ENCODE measurements at regions of chr1 and their contacts with region 1.

Region 1: DNA sequence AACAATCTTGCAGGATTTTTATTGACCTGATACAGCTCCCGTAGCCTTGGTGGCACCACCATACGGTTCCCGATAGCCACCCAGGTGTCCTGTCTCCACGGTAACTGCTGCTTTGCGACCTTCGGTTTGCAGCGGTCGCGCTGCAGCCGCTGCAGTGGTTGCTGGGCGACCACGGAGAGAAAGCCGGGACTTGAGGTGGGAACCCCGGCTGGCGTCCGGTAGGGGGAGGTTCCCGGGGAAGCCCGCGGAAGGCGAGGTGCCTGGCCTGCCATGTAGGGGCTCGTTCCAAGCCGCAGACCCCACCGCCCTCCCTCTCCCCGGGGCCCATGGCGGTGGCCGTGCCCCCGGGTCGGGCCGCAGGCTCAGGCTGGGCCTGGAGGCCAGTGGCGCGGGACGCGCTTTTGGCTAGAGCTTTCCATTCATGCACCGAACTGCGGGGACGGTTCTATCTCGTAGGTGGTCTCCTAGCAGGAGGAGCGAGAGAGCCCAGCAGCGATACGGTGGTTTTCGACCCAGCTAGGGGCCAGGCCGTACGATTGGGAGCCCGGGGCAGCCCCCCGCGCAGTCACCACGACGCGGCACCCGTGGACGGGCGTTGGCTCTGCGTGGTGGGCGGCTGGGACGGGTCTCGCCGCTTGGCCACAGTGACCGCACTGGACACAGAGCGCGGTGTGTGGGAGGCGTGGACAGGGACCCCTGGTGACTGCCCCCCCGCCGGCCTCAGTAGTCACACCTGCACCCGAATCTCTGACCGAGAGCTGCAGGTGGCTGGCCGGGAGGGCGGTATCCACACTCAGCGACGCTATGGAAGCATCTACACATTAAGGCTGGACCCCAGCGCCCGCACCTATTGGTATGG is at the start of gene KLHDC9:
- DNase-seq: peak; percentile 78
- H3K4me3 Mint-ChIP-seq: peak within 1 kb of the TSS; percentile 70
- H3K27ac Mint-ChIP-seq: peak within 1 kb of the TSS; percentile 54
- H3K4me1 Mint-ChIP-seq: peaks cover 39% of the 10 kb centered on the region
- H3K27me3 Mint-ChIP-seq: no peaks in the 10 kb centered on the region
- total RNA-seq, gene KLHDC9: 0.33 to 0.57 TPM

Region 2: DNA sequence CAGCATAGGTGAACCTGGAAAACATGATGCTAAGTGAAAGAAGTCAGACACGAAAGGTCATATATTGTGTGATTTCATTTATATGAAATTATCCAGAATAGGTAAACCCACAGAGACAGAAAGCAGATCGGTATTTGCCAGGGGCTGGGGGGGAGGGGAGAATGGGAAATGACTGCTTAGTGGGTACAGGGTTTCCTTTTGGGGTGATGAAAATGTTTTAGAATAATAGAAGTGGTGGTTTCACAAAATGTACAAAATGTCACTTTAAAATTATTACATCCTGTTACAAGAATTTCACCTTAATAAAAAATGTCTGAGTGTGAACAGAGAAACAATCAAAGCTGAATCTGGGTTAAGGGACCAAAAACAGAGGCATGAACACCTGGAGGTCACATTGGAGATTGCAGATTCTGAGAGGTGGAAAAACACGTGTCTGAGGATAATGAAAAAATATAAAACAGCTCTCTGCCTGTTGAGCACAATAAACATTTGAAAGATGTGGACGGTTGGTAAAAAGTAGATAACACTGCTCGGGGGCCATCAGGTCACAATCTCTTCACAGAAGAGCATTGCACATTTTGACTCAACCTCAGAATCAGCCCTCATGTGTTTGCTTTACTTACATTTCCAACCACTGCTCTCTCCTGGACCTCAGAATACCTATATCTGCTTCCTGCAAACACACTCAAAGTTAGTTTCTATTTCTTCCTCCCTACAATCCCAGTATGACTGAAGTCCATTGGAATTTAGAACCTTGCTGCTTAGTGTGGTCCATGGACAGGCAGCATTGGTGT is 578.6 kb before region 1 on chr1:
- CTCF ChIA-PET with region 1: no interaction called
- intact Hi-C with region 1: no loop called
- DNase-seq: peak; percentile 60
- H3K4me3 Mint-ChIP-seq: peak overlapping the region; percentile 85
- H3K27ac Mint-ChIP-seq: peak overlapping the region; percentile 97
- H3K4me1 Mint-ChIP-seq: peaks cover 71% of the 10 kb centered on the region
- H3K27me3 Mint-ChIP-seq: no peaks in the 10 kb centered on the region

Region 3: DNA sequence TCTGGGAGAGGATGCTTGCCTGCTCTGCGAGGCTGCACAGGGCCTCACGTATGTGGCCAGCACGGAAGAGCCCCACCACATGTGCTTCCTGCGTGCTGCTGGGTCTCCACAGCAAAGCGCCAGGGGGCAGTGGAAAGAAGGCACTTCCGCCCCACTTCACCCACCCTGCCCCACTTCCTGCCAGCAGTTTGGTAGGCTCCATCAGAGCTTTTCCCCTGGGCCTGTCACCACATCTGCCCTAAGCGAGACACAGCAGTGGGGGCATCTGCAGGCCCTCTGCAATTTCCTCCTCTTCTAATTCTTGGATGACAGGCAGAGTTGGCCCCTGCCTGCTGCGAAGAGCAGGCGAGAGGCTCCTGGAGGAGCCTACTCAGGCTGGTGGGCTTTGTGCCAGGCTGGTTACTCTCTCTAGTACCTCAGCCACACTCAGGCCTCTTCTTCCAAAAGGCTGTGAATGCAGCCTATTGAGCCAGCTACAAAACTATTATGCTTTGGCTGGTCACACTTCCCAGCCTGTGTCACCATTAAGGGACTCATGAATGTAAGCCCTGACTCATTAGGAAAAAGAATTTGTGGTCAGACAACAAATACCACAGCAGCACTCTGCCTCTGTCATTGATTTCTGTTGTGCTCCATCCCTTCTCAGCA is 260.8 kb before region 1 on chr1:
- CTCF ChIA-PET with region 1: interaction called, 4 read pairs
- intact Hi-C with region 1: loop called (anchors 2 kb)
- DNase-seq: peak; percentile 90
- H3K4me3 Mint-ChIP-seq: peak overlapping the region; percentile 16
- H3K27ac Mint-ChIP-seq: peak overlapping the region; percentile 82
- H3K4me1 Mint-ChIP-seq: peaks cover 49% of the 10 kb centered on the region
- H3K27me3 Mint-ChIP-seq: no peaks in the 10 kb centered on the region

Region 4: DNA sequence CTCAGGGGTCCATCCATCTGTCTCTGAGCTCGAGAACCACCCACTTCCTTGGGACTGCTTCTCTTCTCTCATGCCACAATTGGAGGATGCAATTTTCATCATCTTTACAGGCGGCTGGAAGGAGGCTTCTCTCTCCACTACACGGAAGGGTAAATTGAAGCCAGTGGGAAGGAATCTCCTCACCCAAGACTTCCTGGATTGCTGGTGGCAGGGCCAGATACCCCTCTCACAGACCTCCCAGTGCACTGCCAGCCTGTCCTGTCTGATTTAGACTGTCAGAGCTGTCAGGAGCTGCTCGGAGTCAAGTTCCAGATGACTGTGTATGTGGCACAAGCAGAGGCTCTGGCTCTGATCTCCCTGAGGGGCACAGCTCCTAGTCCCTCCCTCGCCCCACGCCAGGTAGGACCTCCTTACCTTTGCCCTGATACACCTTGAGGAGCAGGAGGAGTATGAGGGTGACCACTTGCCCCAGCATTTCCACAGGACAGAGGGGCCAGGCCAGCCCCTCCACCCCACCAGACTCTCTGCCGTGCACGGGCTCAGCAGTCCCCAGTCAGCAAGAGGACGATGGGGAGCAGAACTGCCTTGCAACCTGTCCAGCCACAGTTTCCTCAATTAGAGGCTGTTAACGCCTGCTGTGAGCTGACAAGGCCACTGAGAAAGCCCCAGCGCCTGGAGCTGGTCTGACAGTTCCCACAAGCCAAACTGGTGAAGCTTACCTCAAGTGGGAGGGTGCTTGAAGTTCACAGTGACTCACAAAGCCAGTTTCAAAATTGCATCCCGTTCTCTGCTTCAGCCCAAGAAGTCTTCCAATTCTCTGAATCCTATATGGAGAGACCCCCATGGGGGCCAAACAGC is 236.0 kb before region 1 on chr1 and contains the start of gene CD244:
- CTCF ChIA-PET with region 1: no interaction called
- intact Hi-C with region 1: no loop called
- DNase-seq: peak; percentile 76
- H3K4me3 Mint-ChIP-seq: no peak within 1 kb of the TSS
- H3K27ac Mint-ChIP-seq: no peak within 1 kb of the TSS
- H3K4me1 Mint-ChIP-seq: peaks cover 10% of the 10 kb centered on the region
- H3K27me3 Mint-ChIP-seq: no peaks in the 10 kb centered on the region
- total RNA-seq, gene CD244: 0.15 TPM in 1 of 2 experiments, not detected in the other

Region 5: GRCh38 chr1:161021165-161021960 is 77.1 kb before region 1 on chr1:
- CTCF ChIA-PET with region 1: interaction called, 14 read pairs
- intact Hi-C with region 1: no loop called
- DNase-seq: peak; percentile 94
- H3K4me3 Mint-ChIP-seq: peak overlapping the region; percentile 92
- H3K27ac Mint-ChIP-seq: peak overlapping the region; percentile 76
- H3K4me1 Mint-ChIP-seq: peaks cover 35% of the 10 kb centered on the region
- H3K27me3 Mint-ChIP-seq: no peaks in the 10 kb centered on the region

Region 6: GRCh38 chr1:161045750-161046571 is 52.5 kb before region 1 on chr1 and contains the start of gene USF1:
- CTCF ChIA-PET with region 1: interaction called, 135 read pairs
- intact Hi-C with region 1: loop called (anchors 1 kb)
- DNase-seq: peak; percentile 95
- H3K4me3 Mint-ChIP-seq: peak within 1 kb of the TSS; percentile 88
- H3K27ac Mint-ChIP-seq: peak within 1 kb of the TSS; percentile 99
- H3K4me1 Mint-ChIP-seq: peaks cover 32% of the 10 kb centered on the region
- H3K27me3 Mint-ChIP-seq: no peaks in the 10 kb centered on the region
- total RNA-seq, gene USF1: 43.7 to 44.2 TPM

Region 7: DNA sequence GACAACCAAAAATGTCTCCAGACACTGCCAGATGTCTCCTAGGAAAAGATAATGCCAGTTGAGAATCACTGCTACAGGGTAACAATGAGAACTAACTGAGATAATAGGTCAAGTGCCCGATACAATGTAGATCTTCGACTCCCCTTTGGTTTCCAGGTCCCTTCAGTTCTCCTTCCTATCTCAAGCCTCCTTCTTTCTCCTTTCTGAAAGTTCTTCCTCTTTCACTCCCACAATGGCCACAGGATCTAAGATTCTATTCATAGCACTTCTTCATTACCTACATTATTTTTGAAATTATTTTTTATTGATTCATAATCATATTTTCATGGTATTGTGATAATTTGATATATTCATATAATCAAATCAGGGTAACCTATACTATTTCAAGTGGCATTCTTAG is 13.1 kb after region 1 on chr1:
- CTCF ChIA-PET with region 1: interaction called, 16 read pairs
- intact Hi-C with region 1: no loop called
- DNase-seq: no peak
- H3K4me3 Mint-ChIP-seq: no peak overlapping the region
- H3K27ac Mint-ChIP-seq: no peak overlapping the region
- H3K4me1 Mint-ChIP-seq: peaks cover 49% of the 10 kb centered on the region
- H3K27me3 Mint-ChIP-seq: no peaks in the 10 kb centered on the region

Measured in activated naive CD4-positive, alpha-beta T cell treated with anti-CD3 and anti-CD28 coated beads for 36 hours (primary cell).